ENCODE measurements at regions of chr16 and their contacts with region 1.

Region 1: DNA sequence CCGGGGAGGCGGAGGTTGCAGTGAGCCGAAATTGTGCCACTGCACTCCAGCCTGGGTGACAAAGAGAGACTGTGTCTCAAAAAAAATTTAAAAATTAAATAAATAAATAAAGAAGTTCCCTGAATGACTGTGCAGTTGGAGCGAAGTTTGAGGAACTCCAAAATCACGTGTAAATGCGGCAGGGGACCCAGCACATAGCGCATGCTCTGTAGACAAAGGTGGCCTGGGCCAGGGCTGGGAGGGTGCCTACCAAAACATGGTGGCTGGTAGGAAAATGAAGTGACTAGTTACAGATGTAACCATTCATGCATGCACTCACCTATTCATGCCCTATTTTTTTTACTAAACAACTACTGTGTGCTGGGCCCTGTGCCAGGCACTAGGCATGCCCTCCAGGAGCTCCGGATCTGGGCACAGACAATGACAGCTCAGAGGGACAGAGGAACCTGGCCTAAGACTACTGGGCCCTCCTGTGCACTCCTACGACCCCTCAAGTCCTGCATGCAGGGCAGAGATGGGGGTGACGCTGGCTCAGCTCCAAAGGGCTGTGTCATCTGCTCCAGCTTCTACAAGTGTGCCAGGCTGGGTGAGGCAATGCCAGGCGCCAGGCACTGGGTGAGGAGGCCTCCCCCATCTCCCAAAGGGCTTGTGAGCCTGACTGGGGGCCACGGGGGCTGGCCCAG is 65.3 kb downstream of the RMI2 start:
- DNase-seq: no peak
- CTCF ChIP-seq: no peak

Region 2: DNA sequence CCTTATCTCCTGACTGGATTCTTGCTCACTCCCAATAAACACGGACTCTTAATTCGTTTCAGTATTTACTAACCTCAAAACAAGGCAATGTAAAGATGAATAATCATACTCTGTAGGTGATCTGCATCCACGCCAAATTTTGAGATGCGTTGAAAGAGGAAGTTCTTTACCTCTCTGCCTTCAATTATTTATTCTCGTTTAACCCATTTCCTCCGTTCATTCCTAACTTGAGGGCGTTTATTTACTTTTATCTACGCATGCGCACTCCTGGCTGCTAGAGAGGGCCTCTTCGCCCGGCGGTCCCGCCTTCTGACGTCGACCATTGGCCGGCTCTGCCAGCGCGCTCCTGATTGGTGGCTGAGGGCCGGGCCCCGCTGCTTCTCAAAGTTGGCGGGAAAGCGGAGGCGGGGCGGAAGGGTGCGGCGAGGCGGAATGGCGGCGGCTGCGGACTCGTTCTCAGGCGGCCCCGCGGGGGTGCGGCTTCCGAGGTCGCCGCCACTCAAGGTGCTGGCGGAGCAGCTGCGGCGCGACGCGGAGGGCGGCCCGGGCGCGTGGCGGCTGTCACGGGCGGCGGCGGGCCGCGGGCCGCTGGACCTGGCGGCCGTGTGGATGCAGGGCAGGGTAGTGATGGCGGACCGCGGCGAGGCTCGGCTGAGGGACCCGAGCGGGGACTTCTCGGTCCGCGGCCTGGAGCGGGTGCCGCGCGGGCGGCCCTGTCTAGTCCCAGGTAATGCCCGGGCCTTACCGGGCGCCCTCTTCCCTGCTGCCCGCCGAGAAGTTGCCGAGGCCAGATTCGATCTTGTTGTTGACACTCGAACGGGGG is 65.3 kb before region 1 on chr16 and contains the start of gene RMI2:
- in situ Hi-C with region 1: no loop called
- DNase-seq: peak; percentile 99
- CTCF ChIP-seq: no peak

Region 3: DNA sequence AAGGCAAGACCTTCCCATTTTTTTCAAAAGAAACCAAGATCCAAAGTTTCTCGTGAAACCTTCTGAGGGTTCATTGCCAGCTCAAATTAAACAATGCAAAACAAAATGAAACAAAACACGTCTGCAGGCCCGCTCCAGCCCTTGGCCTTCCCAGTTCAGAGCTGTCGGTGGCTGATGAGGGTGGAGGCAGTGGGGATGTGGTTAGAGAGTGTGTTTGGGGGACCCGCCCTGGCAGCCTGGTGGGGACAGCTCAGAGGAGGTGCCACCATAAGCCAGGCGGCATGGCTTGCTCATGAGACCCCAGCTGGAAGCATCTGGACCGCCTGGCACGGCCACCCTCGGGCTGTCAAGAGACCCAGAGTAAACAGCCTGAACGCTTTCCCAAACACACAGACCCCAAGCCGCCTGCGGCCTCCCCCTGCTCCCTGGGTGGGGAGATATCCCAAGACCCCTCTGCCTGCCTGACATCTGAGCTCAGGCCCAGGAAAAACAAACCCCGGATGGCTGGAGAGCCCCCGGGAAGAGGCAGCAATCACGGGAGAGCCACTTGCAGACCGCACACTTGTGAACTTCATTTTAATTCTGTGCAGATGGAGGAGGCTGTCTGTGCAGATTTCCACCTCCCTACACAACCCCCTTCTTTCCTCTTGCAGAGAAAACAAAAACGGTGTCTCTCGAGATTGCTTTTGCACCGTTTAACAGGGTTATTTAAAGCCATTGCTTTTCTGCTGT is 211.6 kb after region 1 on chr16:
- in situ Hi-C with region 1: loop called (anchors 10 kb)
- DNase-seq: peak; percentile 54
- CTCF ChIP-seq: no peak

Measured in GM13976 (cell line).